ENCODE measurements at regions of chr5 and their contacts with region 1.

Region 1: GRCh38 chr5:148374692-148375360 is 8.9 kb upstream of the FBXO38 start:
- DNase-seq: peak in 4 of 5 donors; percentile 35 to 68 (median 42)
- H3K4me3 ChIP-seq: no peak overlapping the region
- H3K27ac ChIP-seq: no peak overlapping the region
- H3K4me1 ChIP-seq: no peaks in the 10 kb centered on the region
- H3K27me3 ChIP-seq: no peaks in the 10 kb centered on the region
- CTCF ChIP-seq: peak; percentile 68

Region 2: DNA sequence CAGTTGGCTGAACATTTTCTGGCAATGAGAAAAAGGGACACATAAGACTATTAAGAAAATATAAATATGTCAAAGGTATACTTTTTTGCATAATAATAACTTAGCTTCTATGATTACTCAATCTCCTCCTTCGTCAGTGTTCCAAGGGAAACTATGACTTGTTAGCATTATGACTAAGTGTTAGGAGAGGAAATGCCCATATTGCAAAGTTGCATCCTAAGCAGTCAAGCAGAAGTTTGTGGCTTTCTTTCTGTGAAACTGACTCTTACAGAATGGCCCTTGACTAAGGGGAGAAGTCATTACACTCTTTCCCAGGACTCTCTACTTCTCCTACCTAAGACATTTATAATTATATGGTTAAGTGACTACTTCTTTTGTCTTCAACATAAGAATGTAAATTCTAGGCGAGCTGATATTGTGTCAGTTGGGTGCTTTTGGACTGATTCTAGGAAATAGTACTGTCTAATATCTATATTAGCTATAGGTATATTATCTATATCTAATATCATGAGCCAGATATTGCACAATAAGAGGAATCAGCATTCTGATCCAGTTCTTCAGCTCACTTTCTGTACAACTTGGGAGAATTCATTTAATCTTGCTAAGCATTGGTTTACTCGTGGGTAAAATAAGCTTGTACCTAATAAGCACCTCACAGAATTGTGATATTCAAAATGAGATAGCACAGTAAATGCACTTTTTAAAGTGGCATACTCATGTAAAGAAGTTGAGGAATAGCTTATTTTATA is 188.4 kb before region 1 on chr5:
- intact Hi-C with region 1: loop called (anchors 10 kb)
- DNase-seq: no peak
- H3K4me3 ChIP-seq: no peak overlapping the region
- H3K27ac ChIP-seq: no peak overlapping the region
- H3K4me1 ChIP-seq: no peaks in the 10 kb centered on the region
- H3K27me3 ChIP-seq: no peaks in the 10 kb centered on the region
- CTCF ChIP-seq: no peak

Measured in kidney (tissue), 22 donors.